B cell (primary cell): ENCODE measurements at regions of chr15 and their contacts with region 1.

Region 1: DNA sequence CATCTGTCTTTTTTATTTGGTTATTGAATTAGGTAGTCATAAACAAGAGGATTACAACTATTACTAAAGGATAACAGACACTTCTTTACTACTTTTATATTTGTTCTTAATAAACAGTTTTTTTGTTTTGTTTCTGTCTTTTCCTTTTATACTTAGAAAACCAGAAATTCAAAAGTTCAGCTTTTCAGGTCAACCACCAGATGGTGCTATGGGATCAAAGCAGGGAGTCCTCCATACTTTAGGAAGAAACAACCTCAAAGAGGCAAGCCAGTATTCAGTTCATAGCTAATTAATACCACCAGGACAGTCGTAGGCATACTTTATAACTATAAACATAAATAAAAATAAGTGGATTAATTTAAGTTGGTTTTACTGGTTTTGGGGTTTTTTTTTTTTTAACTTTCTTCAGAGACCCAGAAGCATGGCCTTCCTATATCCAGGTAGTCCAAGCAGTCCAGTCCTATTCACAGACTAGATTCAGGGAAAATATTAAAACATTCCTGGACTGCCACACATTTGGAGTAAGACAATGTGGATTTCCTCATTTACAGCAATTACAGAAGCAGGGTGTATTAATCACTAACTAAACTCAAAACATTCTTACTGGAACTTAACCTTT is 16.0 kb upstream of the EID1 start:
- DNase-seq: peak; percentile 71
- ATAC-seq: peak; percentile 58
- H3K4me3 ChIP-seq: no peak overlapping the region
- H3K4me3 Mint-ChIP-seq: no peak overlapping the region
- H3K27ac ChIP-seq: no peak overlapping the region
- H3K27ac Mint-ChIP-seq: no peak overlapping the region
- H3K4me1 ChIP-seq: no peaks in the 10 kb centered on the region
- H3K4me1 Mint-ChIP-seq: no peaks in the 10 kb centered on the region
- H3K27me3 ChIP-seq: no peaks in the 10 kb centered on the region
- H3K27me3 Mint-ChIP-seq: peaks cover 17% of the 10 kb centered on the region
- CTCF ChIP-seq: peak; percentile 94

Region 2: GRCh38 chr15:48975472-48976419 is 113.8 kb after region 1 on chr15:
- CTCF ChIA-PET with region 1: interaction called, 16 read pairs
- POLR2A ChIA-PET with region 1: no interaction called
- intact Hi-C with region 1: no loop called
- DNase-seq: peak; percentile 78
- ATAC-seq: peak; percentile 96
- H3K4me3 ChIP-seq: peak overlapping the region in 4 of 5 experiments; percentile 27 to 53 (median 50)
- H3K4me3 Mint-ChIP-seq: peak overlapping the region; percentile 78
- H3K27ac ChIP-seq: no peak overlapping the region
- H3K27ac Mint-ChIP-seq: no peak overlapping the region
- H3K4me1 ChIP-seq: peaks cover 5 to 8% of the 10 kb centered on the region in 2 donors
- H3K4me1 Mint-ChIP-seq: peaks cover 5% of the 10 kb centered on the region
- H3K27me3 ChIP-seq: peaks cover 0 to 23% (median 10%) of the 10 kb centered on the region in 4 experiments
- H3K27me3 Mint-ChIP-seq: peaks cover 46% of the 10 kb centered on the region
- CTCF ChIP-seq: peak; percentile 97

Region 3: DNA sequence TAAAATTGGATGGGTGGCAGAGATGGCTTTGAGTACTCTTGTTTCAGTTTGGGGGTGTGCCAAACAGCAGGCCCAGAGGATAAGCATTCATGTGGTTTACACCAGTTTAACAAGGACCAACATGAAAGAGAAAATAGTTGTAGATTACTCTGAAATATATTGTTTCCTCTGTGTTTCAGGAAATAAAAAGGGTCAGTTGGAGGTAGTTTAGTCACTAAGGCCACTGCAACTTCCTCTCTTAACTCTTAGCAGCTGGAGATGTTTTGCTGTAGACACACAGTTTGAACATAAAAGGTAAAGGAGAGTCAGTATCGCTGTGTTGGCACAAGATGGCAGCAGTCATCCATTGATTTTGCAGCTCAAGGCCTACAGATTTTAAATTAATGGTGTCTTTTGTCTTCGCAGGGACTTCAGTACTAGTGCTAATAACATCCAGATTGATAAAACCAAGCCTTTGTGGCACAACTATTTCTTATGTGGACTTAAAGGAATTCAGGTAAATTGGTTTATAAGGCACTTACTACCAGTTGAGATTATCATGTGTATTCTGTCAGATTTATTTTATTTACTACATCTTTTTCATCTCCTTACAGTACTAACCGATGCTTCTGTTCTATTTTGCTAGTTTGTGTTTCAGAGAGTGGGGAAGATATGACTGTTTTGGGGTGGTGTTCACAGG is 373.7 kb after region 1 on chr15:
- CTCF ChIA-PET with region 1: interaction called, 3 read pairs
- POLR2A ChIA-PET with region 1: no interaction called
- intact Hi-C with region 1: loop called (anchors 5 kb)
- DNase-seq: peak; percentile 57
- ATAC-seq: peak; percentile 31
- H3K4me3 ChIP-seq: no peak overlapping the region
- H3K4me3 Mint-ChIP-seq: no peak overlapping the region
- H3K27ac ChIP-seq: no peak overlapping the region
- H3K27ac Mint-ChIP-seq: no peak overlapping the region
- H3K4me1 ChIP-seq: no peaks in the 10 kb centered on the region
- H3K4me1 Mint-ChIP-seq: peaks cover 8% of the 10 kb centered on the region
- H3K27me3 ChIP-seq: no peaks in the 10 kb centered on the region
- H3K27me3 Mint-ChIP-seq: no peaks in the 10 kb centered on the region
- CTCF ChIP-seq: peak; percentile 75

Region 4: GRCh38 chr15:50003786-50004334 is 1141.9 kb after region 1 on chr15:
- CTCF ChIA-PET with region 1: interaction called, 15 read pairs
- POLR2A ChIA-PET with region 1: no interaction called
- intact Hi-C with region 1: no loop called
- DNase-seq: peak; percentile 69
- ATAC-seq: peak; percentile 87
- H3K4me3 ChIP-seq: no peak overlapping the region
- H3K4me3 Mint-ChIP-seq: no peak overlapping the region
- H3K27ac ChIP-seq: no peak overlapping the region
- H3K27ac Mint-ChIP-seq: no peak overlapping the region
- H3K4me1 ChIP-seq: peaks cover 4 to 8% of the 10 kb centered on the region in 2 donors
- H3K4me1 Mint-ChIP-seq: peaks cover 9% of the 10 kb centered on the region
- H3K27me3 ChIP-seq: no peaks in the 10 kb centered on the region
- H3K27me3 Mint-ChIP-seq: peaks cover 5% of the 10 kb centered on the region
- CTCF ChIP-seq: peak; percentile 50